ENCODE measurements at regions of chr18 and their contacts with region 1.

Region 1: GRCh38 chr18:34592961-34593382 is 117.1 kb upstream of the DTNA start:
- DNase-seq: peak; percentile 70 to 84
- ATAC-seq: peak; percentile 90
- H3K4me3 ChIP-seq: peak overlapping the region; percentile 43 to 89
- H3K27ac ChIP-seq: peak overlapping the region; percentile 77 to 87
- H3K4me1 ChIP-seq: peaks cover 0 to 8% of the 10 kb centered on the region in 2 donors
- H3K27me3 ChIP-seq: no peaks in the 10 kb centered on the region

Region 2: GRCh38 chr18:34444622-34445021 is 148.3 kb before region 1 on chr18:
- intact Hi-C with region 1: no loop called
- DNase-seq: no peak
- ATAC-seq: no peak
- H3K4me3 ChIP-seq: no peak overlapping the region
- H3K27ac ChIP-seq: no peak overlapping the region
- H3K4me1 ChIP-seq: no peaks in the 10 kb centered on the region
- H3K27me3 ChIP-seq: no peaks in the 10 kb centered on the region

Region 3: GRCh38 chr18:34493099-34493544 is 99.8 kb before region 1 on chr18:
- intact Hi-C with region 1: loop called (anchors 2 kb)
- DNase-seq: peak; percentile 91 to 93
- ATAC-seq: peak; percentile 88
- H3K4me3 ChIP-seq: peak overlapping the region; percentile 95 to 99
- H3K27ac ChIP-seq: peak overlapping the region in 1 of 2 donors; percentile 80
- H3K4me1 ChIP-seq: peaks cover 0 to 2% of the 10 kb centered on the region in 2 donors
- H3K27me3 ChIP-seq: no peaks in the 10 kb centered on the region

Region 4: DNA sequence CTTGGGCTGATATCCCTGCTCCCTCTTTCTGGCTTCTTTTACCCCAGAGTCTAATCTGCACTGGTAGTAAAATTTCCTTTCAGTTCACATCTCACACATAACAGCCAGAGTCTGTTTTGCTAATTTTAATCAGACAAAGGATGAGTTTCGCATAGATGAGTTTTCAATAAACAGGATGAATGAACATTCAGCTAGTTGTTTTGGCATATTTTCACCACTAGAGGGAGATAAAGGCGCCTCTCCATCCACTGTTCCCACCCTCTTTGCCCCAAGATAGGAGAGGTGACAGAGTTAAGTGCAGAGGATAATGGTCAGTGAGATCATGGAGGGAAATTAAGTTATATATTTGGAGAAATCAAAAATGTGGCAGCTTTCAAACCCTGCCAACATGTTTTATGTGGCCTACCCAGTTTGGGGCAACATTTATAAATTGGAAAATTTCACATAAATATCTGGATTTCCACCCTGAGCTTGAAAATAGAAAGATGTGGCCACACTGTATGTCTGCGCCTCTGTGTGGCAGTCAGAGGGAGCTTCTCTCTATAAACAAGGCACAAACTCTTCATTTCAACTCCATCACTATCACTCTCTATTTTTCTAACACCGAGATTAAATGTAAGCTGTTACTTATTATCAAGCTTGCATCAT is 68.6 kb after region 1 on chr18:
- intact Hi-C with region 1: loop called (anchors 1 to 5 kb)
- DNase-seq: no peak
- ATAC-seq: peak; percentile 71
- H3K4me3 ChIP-seq: no peak overlapping the region
- H3K27ac ChIP-seq: no peak overlapping the region
- H3K4me1 ChIP-seq: peaks cover 3 to 6% of the 10 kb centered on the region in 2 donors
- H3K27me3 ChIP-seq: no peaks in the 10 kb centered on the region

Region 5: DNA sequence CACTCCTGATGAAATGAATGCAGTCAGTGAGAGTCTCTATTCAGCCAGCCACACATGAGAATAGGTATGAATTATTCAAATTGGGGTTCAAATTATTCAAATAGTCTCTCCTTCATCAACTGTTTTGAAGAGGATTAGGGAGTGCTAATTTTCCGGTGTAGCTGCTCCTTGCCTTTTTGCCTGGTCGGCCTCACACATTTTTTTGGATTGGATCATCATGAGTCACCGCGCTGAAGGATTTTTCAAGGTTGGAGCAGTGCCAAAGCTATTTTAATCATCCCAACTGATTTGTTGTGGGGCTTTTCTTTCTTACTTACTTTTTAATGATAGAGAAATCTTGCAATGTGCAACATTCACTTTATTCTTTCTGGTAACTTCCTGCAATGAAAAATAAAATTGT is 114.7 kb after region 1 on chr18:
- intact Hi-C with region 1: loop called in 1 of 2 experiments (anchors 5 kb)
- DNase-seq: no peak
- ATAC-seq: peak; percentile 76
- H3K4me3 ChIP-seq: peak overlapping the region in 1 of 2 donors; percentile 59
- H3K27ac ChIP-seq: no peak overlapping the region
- H3K4me1 ChIP-seq: peaks cover 3 to 9% of the 10 kb centered on the region in 2 donors
- H3K27me3 ChIP-seq: no peaks in the 10 kb centered on the region